AG04449 (cell line): ENCODE measurements at regions of chr3 and their contacts with region 1.

Region 1: DNA sequence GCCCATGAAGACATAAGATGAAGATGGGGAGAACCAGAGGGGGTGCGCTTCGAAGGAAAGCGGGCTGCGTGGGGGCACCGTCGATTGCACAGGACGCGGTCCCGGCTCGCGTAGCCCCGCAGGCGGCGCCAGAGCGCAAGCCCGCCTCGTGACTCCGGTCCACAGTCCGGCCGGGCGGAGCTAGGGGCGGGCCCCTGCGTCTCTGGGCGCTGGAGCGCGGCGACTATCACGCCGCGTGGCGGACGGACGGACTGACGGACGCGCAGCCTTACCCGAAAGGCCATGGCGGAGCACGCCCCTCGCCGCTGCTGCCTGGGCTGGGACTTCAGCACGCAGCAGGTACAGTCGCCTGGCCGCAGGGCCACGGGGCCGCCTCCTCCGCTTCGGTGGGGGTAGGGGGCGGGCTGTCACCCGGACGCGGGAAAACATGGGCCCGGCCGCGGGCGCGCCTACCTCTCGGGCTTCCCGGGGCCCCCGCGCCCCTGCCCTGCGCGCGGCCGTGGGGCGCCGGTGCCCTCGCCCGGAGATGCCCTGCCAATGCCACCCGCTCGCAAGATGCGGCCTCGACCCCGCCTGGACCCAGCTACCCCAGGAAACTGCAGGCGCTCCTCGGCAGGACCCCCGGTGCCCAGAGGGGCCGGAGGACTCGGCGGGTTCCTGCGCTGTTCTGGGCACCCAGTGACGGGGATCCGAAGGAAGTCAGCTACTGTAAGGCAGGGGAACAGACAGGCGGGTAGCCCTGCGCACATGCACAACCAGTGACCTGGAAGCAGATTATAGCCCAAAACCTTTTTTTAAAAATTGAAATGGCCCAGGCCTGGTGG is at the start of gene XYLB:
- DNase-seq: no peak
- H3K4me3 ChIP-seq: peak within 1 kb of the TSS; percentile 84
- CTCF ChIP-seq: peak; percentile 94

Region 2: GRCh38 chr3:38136777-38137614 is 209.8 kb before region 1 on chr3 and contains the start of gene ACAA1:
- CTCF ChIA-PET with region 1: interaction called, 15 read pairs
- POLR2A ChIA-PET with region 1: no interaction called
- DNase-seq: peak; percentile 90
- H3K4me3 ChIP-seq: peak within 1 kb of the TSS; percentile 90
- CTCF ChIP-seq: no peak

Region 3: DNA sequence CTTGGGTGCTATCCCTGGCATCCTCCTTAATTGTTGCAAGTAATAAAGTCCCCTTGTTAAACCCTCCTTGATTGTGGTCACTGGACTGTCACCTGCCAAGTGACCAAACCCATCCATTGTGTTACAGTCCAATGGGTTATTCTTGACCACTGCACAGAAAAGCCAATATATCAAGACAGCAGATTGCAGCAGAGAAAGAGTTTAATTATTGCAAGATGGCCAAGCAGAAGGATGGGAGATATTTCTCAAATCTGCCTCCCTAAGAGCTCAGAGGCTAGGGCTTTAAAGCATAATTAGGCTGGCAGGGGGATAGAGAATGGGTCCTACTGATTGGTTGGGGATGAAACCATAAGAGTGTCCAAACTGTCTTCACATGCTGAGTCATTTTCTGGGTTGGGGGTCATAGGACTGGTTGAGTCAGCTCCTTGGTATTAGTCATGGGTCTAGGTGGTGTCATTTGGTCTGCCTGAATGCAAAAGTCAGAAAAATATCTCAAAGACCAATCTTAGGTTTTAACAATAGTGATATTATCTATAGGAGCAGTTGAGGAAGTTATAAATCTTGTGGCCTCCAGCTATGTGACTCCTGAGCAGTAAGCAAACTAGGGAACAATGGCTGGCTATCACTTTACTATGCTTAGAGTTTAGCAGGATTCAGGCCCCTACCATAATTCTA is 19.3 kb before region 1 on chr3:
- CTCF ChIA-PET with region 1: interaction called, 17 read pairs
- POLR2A ChIA-PET with region 1: no interaction called
- DNase-seq: no peak
- H3K4me3 ChIP-seq: no peak overlapping the region
- CTCF ChIP-seq: no peak

Region 4: GRCh38 chr3:38360345-38360744 is 13.5 kb after region 1 on chr3:
- CTCF ChIA-PET with region 1: interaction called, 14 read pairs
- POLR2A ChIA-PET with region 1: no interaction called
- DNase-seq: no peak
- H3K4me3 ChIP-seq: no peak overlapping the region
- CTCF ChIP-seq: no peak

Region 5: GRCh38 chr3:38479431-38480092 is 132.8 kb after region 1 on chr3:
- CTCF ChIA-PET with region 1: interaction called, 95 read pairs
- POLR2A ChIA-PET with region 1: no interaction called
- DNase-seq: no peak
- H3K4me3 ChIP-seq: no peak overlapping the region
- CTCF ChIP-seq: peak; percentile 86